ENCODE measurements at regions of chr11 and their contacts with region 1.

Region 1: GRCh38 chr11:76721755-76722677 is 51.5 kb upstream of the LRRC32 start:
- DNase-seq: peak; percentile 51 to 70 (median 63)
- H3K4me3 ChIP-seq: no peak overlapping the region
- H3K4me3 Mint-ChIP-seq: peak overlapping the region in 1 of 2 donors; percentile 74
- H3K27ac ChIP-seq: no peak overlapping the region
- H3K27ac Mint-ChIP-seq: no peak overlapping the region
- H3K4me1 ChIP-seq: no peaks in the 10 kb centered on the region
- H3K4me1 Mint-ChIP-seq: peaks cover 7% of the 10 kb centered on the region
- H3K27me3 ChIP-seq: peaks cover 2 to 16% of the 10 kb centered on the region in 2 donors
- H3K27me3 Mint-ChIP-seq: peaks cover 18 to 38% (median 23%) of the 10 kb centered on the region in 3 donors
- CTCF ChIP-seq: peak; percentile 86

Region 2: DNA sequence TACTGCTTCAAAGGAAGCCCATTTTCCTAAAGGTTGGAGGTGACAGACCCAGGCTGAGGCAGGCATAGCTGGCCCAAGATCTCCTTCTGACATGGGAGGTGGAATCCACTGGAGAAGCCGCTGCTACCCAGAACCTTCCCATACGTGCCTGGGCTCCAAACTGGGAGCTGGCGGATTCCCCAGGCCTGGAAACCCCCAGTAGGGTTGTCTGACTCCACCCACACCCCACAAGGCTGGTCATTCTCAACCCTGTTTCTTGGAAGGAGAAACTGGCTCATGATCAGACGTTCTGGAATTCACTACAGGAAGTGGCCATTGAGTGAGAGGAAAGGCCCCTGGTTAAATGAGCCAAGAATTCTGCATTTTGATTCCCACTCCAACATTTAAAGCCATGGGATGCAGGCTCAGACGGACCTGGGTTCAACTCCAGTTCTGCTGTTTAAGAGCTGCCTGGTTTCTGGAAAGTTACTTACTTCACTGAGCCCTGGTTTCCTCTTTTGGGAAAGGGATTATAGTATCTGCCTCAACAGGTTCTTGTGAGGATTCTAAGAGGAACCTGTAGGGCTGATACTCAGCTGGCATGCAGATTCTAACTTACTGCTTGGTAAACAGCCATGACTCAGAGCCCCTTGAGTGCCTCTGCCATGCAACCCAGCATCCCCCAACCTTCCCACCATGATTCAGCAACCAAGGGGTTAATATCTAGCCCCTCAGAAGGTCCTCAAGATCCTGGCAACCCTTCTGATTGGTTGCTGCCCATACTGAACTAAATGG is 41.7 kb after region 1 on chr11:
- intact Hi-C with region 1: no loop called
- DNase-seq: no peak
- H3K4me3 ChIP-seq: no peak overlapping the region
- H3K4me3 Mint-ChIP-seq: no peak overlapping the region
- H3K27ac ChIP-seq: no peak overlapping the region
- H3K27ac Mint-ChIP-seq: no peak overlapping the region
- H3K4me1 ChIP-seq: peaks cover 15 to 19% of the 10 kb centered on the region in 2 donors
- H3K4me1 Mint-ChIP-seq: peaks cover 26% of the 10 kb centered on the region
- H3K27me3 ChIP-seq: peaks cover 0 to 14% of the 10 kb centered on the region in 2 donors
- H3K27me3 Mint-ChIP-seq: peaks cover 34 to 45% (median 38%) of the 10 kb centered on the region in 3 donors
- CTCF ChIP-seq: no peak

Region 3: GRCh38 chr11:76799066-76799804 is 77.2 kb after region 1 on chr11:
- intact Hi-C with region 1: loop called in 1 of 2 experiments (anchors 5 kb)
- DNase-seq: peak; percentile 71 to 85 (median 75)
- H3K4me3 ChIP-seq: peak overlapping the region in 1 of 3 experiments; percentile 66
- H3K4me3 Mint-ChIP-seq: peak overlapping the region; percentile 67 to 77
- H3K27ac ChIP-seq: no peak overlapping the region
- H3K27ac Mint-ChIP-seq: no peak overlapping the region
- H3K4me1 ChIP-seq: peaks cover 9 to 11% of the 10 kb centered on the region in 2 donors
- H3K4me1 Mint-ChIP-seq: peaks cover 14% of the 10 kb centered on the region
- H3K27me3 ChIP-seq: peaks cover 0 to 8% of the 10 kb centered on the region in 2 donors
- H3K27me3 Mint-ChIP-seq: peaks cover 18 to 29% (median 24%) of the 10 kb centered on the region in 3 donors
- CTCF ChIP-seq: peak; percentile 98

Region 4: DNA sequence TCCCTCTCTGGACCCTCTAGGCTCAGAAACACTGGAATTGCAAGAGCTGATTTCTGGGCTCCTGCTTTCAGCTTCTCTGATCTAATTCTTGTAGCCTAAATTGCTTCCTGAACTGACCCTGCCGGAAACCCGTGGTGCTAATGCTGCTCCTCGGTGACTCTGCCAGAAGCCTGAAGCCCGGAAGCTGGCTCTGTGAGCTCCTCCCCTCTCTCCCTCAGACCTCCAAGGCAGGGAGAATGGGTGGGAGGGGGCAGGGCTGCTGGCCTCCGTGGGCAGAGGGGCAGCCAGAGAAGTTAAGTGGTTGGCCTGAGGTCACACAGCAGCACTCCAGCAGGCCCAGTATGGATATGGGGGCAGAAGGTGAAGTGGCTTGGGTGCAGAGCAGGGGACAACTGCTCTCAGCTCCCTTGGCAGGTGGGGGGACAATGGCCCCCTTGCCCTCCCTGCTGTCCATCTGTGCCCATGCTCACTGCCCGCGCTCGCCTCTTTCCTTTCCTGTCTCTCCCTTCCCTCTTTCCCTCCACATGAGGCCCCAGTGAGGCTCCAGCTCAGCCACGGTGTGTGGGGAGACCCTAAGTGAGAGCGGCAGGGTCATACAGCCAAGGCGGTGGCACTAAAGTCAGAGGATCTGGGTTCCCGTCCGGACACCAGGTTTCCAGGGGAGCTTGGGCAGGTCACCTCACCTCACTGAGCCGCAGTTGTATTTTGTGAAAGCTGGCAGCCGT is 361.0 kb after region 1 on chr11:
- intact Hi-C with region 1: loop called in 1 of 2 experiments (anchors 10 kb)
- DNase-seq: peak; percentile 44 to 47 (median 47)
- H3K4me3 ChIP-seq: peak overlapping the region in 1 of 3 experiments; percentile 52
- H3K4me3 Mint-ChIP-seq: peak overlapping the region; percentile 57 to 75
- H3K27ac ChIP-seq: peak overlapping the region; percentile 61 to 75
- H3K27ac Mint-ChIP-seq: peak overlapping the region in 6 of 7 donors; percentile 37 to 89 (median 66)
- H3K4me1 ChIP-seq: peaks cover 14 to 15% of the 10 kb centered on the region in 2 donors
- H3K4me1 Mint-ChIP-seq: peaks cover 18% of the 10 kb centered on the region
- H3K27me3 ChIP-seq: no peaks in the 10 kb centered on the region
- H3K27me3 Mint-ChIP-seq: peaks cover 0 to 5% (median 1%) of the 10 kb centered on the region in 3 donors
- CTCF ChIP-seq: no peak

Measured in CD14-positive monocyte (primary cell).